Panc1 (cell line): ENCODE measurements at regions of chr5 and their contacts with region 1.

Region 1: GRCh38 chr5:15003511-15003920 is 131.9 kb upstream of the ANKH start:
- DNase-seq: peak; percentile 82
- ATAC-seq: peak; percentile 91
- H3K4me3 ChIP-seq: no peak overlapping the region
- H3K27ac ChIP-seq: no peak overlapping the region
- H3K4me1 ChIP-seq: peaks cover 6% of the 10 kb centered on the region
- H3K27me3 ChIP-seq: peaks cover 8% of the 10 kb centered on the region; the same call in 1 of the 2 replicates
- CTCF ChIP-seq: peak; percentile 90

Region 2: DNA sequence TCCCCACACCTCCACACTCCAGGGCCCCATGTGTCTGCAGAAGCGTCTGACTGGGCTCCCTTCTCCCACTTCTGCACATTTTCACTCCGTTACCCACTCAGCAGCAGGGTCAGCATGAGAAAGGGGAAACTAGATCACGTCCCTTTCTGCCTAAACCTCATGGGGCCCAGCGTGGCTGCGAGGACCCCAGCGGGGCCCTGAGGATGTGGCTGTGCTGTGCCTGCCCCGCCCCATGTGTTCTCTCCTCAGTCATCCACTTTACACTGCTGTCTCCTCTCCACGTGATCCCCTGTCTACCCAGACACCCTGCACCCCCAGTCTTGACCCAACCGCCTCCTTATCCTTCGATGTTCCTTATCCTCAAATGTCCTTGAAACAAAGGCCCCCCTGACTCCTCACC is 481.8 kb before region 1 on chr5:
- CTCF ChIA-PET with region 1: interaction called, 12 read pairs
- POLR2A ChIA-PET with region 1: no interaction called
- in situ Hi-C with region 1: no loop called
- intact Hi-C with region 1: no loop called
- DNase-seq: no peak
- ATAC-seq: no peak
- H3K4me3 ChIP-seq: no peak overlapping the region
- H3K27ac ChIP-seq: no peak overlapping the region
- H3K4me1 ChIP-seq: no peaks in the 10 kb centered on the region
- H3K27me3 ChIP-seq: no peaks in the 10 kb centered on the region
- CTCF ChIP-seq: no peak

Region 3: GRCh38 chr5:14727428-14727865 is 276.1 kb before region 1 on chr5:
- CTCF ChIA-PET with region 1: interaction called, 16 read pairs
- POLR2A ChIA-PET with region 1: no interaction called
- in situ Hi-C with region 1: no loop called
- intact Hi-C with region 1: loop called (anchors 1 kb)
- DNase-seq: peak; percentile 78
- ATAC-seq: peak; percentile 80
- H3K4me3 ChIP-seq: no peak overlapping the region
- H3K27ac ChIP-seq: no peak overlapping the region
- H3K4me1 ChIP-seq: no peaks in the 10 kb centered on the region
- H3K27me3 ChIP-seq: no peaks in the 10 kb centered on the region
- CTCF ChIP-seq: peak; percentile 96

Region 4: DNA sequence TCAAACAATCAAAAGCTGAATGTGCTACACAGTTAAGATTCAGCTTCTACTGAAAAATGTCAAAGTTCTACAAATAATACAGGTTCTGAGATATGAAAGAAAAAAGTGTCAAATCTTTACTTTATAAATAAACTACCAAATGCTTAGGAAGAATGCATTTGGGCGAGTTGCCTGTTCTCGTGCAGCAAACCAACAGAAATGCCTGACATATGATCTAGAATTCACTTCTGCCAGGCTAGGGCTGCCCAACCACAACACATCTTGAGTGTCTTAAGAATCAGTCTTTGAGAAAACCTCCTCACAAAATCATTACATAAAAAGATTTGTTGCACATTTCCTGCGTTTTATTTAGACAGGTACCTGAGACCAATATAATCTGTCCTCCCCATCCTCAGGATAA is 174.1 kb before region 1 on chr5:
- CTCF ChIA-PET with region 1: no interaction called
- POLR2A ChIA-PET with region 1: interaction called, 23 read pairs
- in situ Hi-C with region 1: no loop called
- intact Hi-C with region 1: no loop called
- DNase-seq: no peak
- ATAC-seq: no peak
- H3K4me3 ChIP-seq: no peak overlapping the region
- H3K27ac ChIP-seq: no peak overlapping the region
- H3K4me1 ChIP-seq: no peaks in the 10 kb centered on the region
- H3K27me3 ChIP-seq: no peaks in the 10 kb centered on the region
- CTCF ChIP-seq: no peak

Region 5: DNA sequence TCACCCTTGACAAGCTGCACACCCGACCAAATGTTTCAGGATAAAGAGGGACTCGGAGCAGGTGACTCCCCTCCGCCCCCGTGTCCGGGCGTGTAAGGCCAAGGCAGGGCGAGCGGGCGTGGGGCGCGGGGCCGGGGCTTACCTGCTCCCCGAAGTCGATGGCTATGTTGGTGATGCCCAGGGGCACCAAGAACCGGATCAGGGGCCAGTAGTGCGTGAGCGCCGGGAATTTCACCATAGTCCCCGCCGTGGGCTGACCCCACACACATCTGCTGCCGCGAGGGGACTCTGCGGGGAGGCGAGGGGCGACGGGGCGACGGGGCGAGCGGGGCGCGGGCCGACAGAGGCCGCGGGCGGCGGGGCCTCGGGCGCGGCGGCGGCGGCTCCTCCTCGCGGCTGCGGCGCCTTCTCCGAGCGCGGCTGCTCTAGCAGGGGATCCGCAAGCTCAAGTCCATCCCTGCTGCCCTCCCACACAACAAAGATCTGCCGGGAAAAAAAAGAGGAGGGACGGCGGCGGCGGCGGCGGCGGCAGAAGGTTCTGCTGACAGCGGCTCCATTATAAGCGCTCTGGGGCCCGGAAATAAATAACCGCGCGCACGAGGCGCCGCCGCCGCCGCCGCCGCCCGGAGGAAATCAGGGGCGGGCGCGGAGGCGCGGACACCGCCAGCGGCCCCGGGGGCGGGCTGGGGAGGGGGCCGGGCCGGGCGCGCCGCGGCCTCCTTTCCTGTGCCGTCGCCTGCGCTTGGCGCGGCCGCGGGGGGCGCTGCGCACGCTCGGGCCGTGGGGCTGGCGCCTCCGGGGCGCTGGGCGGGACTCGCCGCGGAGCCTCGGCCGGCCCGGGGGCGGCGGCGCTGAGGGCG is 132.1 kb before region 1 on chr5 and contains the start of gene ANKH:
- CTCF ChIA-PET with region 1: no interaction called
- POLR2A ChIA-PET with region 1: no interaction called
- in situ Hi-C with region 1: no loop called
- intact Hi-C with region 1: loop called (anchors 5 kb)
- DNase-seq: no peak
- ATAC-seq: peak; percentile 98
- H3K4me3 ChIP-seq: peak within 1 kb of the TSS; percentile 46 to 59
- H3K27ac ChIP-seq: no peak within 1 kb of the TSS
- H3K4me1 ChIP-seq: peaks cover 4% of the 10 kb centered on the region; the same call in 1 of the 2 replicates
- H3K27me3 ChIP-seq: peaks cover 24% of the 10 kb centered on the region
- CTCF ChIP-seq: peak; percentile 87
- total RNA-seq, gene ANKH: 11.2 TPM